ENCODE measurements at regions of chr1 and their contacts with region 1.

Region 1: GRCh38 chr1:46603858-46604549 is at the start of gene MKNK1:
- DNase-seq: peak; percentile 99
- ATAC-seq: peak; percentile 98
- H3K4me3 Mint-ChIP-seq: peak within 1 kb of the TSS; percentile 87
- H3K27ac Mint-ChIP-seq: peak within 1 kb of the TSS; percentile 82
- H3K4me1 Mint-ChIP-seq: peaks cover 55% of the 10 kb centered on the region
- H3K27me3 Mint-ChIP-seq: no peaks in the 10 kb centered on the region
- total RNA-seq, gene MKNK1: 27.8 to 31.0 TPM

Region 2: GRCh38 chr1:46508757-46509156 is 95.2 kb before region 1 on chr1:
- CTCF ChIA-PET with region 1: no interaction called
- POLR2A ChIA-PET with region 1: no interaction called
- intact Hi-C with region 1: no loop called
- DNase-seq: no peak
- ATAC-seq: peak; percentile 84
- H3K4me3 Mint-ChIP-seq: no peak overlapping the region
- H3K27ac Mint-ChIP-seq: no peak overlapping the region
- H3K4me1 Mint-ChIP-seq: no peaks in the 10 kb centered on the region
- H3K27me3 Mint-ChIP-seq: peaks cover 14% of the 10 kb centered on the region

Region 3: GRCh38 chr1:46667782-46668760 is 64.1 kb after region 1 on chr1 and contains the start of gene ATPAF1:
- CTCF ChIA-PET with region 1: interaction called, 3 read pairs
- POLR2A ChIA-PET with region 1: no interaction called
- intact Hi-C with region 1: loop called in 1 of 2 experiments (anchors 1 kb)
- DNase-seq: peak; percentile 84
- ATAC-seq: peak; percentile 96
- H3K4me3 Mint-ChIP-seq: no peak within 1 kb of the TSS
- H3K27ac Mint-ChIP-seq: peak within 1 kb of the TSS; percentile 75
- H3K4me1 Mint-ChIP-seq: peaks cover 19% of the 10 kb centered on the region
- H3K27me3 Mint-ChIP-seq: no peaks in the 10 kb centered on the region
- total RNA-seq, gene ATPAF1: 46.1 to 48.5 TPM

Measured in activated CD4-positive, alpha-beta T cell treated with anti-CD3 and anti-CD28 coated beads for 36 hours (primary cell).